CD4-positive, alpha-beta T cell (primary cell): ENCODE measurements at regions of chr11 and their contacts with region 1.

Region 1: DNA sequence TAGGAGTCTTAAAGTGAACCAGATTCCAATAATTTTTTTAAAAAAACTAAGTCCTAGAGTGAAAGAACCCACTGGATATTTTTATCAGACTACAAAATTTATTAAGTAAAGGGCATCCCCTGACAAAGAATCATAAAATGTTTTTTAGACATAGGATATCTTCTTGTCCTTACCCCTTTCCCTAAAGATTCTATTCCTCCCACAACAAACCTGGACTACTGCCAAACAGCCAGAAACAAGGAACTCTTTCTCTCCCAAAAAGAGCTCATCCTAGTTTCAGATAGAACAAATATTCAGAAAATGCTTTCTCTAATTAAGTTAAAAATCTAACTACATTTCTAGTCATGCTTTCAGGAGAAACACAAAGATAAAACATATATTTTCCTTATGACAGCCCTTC is 327.1 kb downstream of the FAM181B start:
- DNase-seq: no peak
- ATAC-seq: no peak
- H3K4me3 ChIP-seq: no peak overlapping the region
- H3K4me3 Mint-ChIP-seq: no peak overlapping the region
- H3K27ac ChIP-seq: no peak overlapping the region
- H3K27ac Mint-ChIP-seq: no peak overlapping the region
- H3K4me1 ChIP-seq: no peaks in the 10 kb centered on the region
- H3K4me1 Mint-ChIP-seq: no peaks in the 10 kb centered on the region
- H3K27me3 ChIP-seq: no peaks in the 10 kb centered on the region
- H3K27me3 Mint-ChIP-seq: no peaks in the 10 kb centered on the region
- CTCF ChIP-seq: no peak

Region 2: GRCh38 chr11:82451002-82451401 is 44.4 kb after region 1 on chr11:
- CTCF ChIA-PET with region 1: no interaction called
- POLR2A ChIA-PET with region 1: no interaction called
- intact Hi-C with region 1: loop called in 1 of 2 experiments (anchors 1 kb)
- DNase-seq: no peak
- ATAC-seq: no peak
- H3K4me3 ChIP-seq: no peak overlapping the region
- H3K4me3 Mint-ChIP-seq: no peak overlapping the region
- H3K27ac ChIP-seq: no peak overlapping the region
- H3K27ac Mint-ChIP-seq: no peak overlapping the region
- H3K4me1 ChIP-seq: no peaks in the 10 kb centered on the region
- H3K4me1 Mint-ChIP-seq: no peaks in the 10 kb centered on the region
- H3K27me3 ChIP-seq: no peaks in the 10 kb centered on the region
- H3K27me3 Mint-ChIP-seq: no peaks in the 10 kb centered on the region
- CTCF ChIP-seq: no peak